ENCODE measurements at regions of chr9 and their contacts with region 1.

Region 1: DNA sequence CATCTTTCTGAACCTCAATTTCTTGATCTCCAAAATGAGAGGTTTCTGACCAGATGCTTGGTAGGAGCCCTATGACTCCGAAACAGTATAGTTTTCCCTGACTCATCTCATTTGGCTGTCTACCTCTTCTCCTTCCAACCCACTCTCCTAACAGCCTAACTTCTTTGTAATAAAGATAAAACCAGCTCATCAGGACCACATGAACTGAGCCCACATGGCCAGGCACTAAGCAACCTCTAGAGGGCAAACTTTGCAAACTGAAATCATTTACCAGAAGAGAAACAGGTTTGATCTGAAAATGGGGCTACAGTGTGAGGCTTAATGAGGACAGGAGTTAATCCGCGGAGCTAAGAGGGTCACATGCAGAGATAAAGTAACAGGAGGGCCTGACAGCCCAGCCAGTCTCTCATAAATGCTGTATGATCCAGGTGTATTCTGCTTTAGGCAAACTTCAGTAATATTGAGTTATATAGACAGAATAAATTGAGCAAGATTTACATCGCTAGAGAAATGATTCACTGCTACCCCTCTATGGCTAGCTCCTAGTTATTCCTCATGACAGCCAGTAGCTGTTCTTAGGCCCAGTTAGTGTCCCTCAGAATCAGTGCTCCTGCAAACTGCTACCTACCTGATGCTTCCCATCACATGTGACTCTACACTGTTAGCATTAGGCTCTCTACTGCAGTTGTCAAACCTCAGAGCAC is 64.6 kb downstream of the ABCA1 start:
- DNase-seq: no peak
- ATAC-seq: peak; percentile 74
- H3K4me3 Mint-ChIP-seq: no peak overlapping the region
- H3K27ac Mint-ChIP-seq: no peak overlapping the region
- H3K4me1 Mint-ChIP-seq: peaks cover 53% of the 10 kb centered on the region
- H3K27me3 Mint-ChIP-seq: no peaks in the 10 kb centered on the region
- CTCF ChIP-seq: no peak

Region 2: GRCh38 chr9:104700306-104701028 is 162.9 kb before region 1 on chr9:
- CTCF ChIA-PET with region 1: no interaction called
- POLR2A ChIA-PET with region 1: no interaction called
- intact Hi-C with region 1: no loop called
- DNase-seq: no peak
- ATAC-seq: no peak
- H3K4me3 Mint-ChIP-seq: no peak overlapping the region
- H3K27ac Mint-ChIP-seq: no peak overlapping the region
- H3K4me1 Mint-ChIP-seq: no peaks in the 10 kb centered on the region
- H3K27me3 Mint-ChIP-seq: no peaks in the 10 kb centered on the region
- CTCF ChIP-seq: no peak

Region 3: DNA sequence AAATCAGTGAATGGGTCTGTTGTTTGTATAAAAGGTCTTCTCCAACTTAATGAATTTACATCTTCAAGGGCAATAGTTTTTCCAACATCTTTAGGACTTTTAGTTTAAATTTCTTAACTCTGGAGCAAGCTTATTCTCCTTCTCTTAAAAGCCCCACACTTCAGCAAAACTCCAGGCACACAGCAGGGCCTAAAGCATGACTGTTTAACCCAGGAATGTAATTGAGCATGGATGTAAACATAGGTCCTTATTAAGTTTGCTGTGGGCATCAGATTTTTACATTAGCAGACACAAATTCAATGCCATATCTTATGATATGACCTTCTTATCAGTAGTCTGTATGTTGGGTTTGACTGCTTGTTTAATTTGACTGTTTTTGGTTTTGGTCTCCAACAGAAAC is 14.3 kb before region 1 on chr9:
- CTCF ChIA-PET with region 1: interaction called, 12 read pairs
- POLR2A ChIA-PET with region 1: no interaction called
- intact Hi-C with region 1: no loop called
- DNase-seq: no peak
- ATAC-seq: no peak
- H3K4me3 Mint-ChIP-seq: no peak overlapping the region
- H3K27ac Mint-ChIP-seq: no peak overlapping the region
- H3K4me1 Mint-ChIP-seq: no peaks in the 10 kb centered on the region
- H3K27me3 Mint-ChIP-seq: no peaks in the 10 kb centered on the region
- CTCF ChIP-seq: no peak

Region 4: GRCh38 chr9:104991144-104991953 is 128.0 kb after region 1 on chr9:
- CTCF ChIA-PET with region 1: no interaction called
- POLR2A ChIA-PET with region 1: no interaction called
- intact Hi-C with region 1: loop called (anchors 1 kb)
- DNase-seq: peak; percentile 69
- ATAC-seq: peak; percentile 80
- H3K4me3 Mint-ChIP-seq: peak overlapping the region; percentile 86
- H3K27ac Mint-ChIP-seq: peak overlapping the region; percentile 69
- H3K4me1 Mint-ChIP-seq: peaks cover 33% of the 10 kb centered on the region
- H3K27me3 Mint-ChIP-seq: peaks cover 2% of the 10 kb centered on the region
- CTCF ChIP-seq: no peak

Region 5: DNA sequence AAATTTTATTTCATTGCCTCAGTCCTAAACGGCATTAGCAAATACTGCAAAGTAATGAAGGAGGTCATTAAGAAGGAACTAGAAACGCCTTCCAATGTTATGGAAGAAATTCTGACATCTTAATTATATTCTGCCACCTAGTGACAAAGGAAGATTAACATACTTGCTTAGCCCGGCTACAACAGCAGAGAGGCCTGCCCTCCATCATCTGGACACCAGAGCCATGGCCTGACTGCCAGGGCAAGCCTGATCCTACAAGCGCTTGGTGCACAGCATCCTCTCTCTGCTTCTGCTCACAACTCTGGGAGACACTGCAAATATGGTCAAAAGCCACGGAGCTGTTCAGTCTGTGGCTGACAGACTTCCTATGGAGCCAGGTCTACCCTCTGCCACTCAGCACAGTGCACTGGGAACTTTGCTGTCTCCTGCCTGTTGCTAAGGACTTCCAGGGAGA is 293.8 kb after region 1 on chr9:
- CTCF ChIA-PET with region 1: interaction called, 53 read pairs
- POLR2A ChIA-PET with region 1: no interaction called
- intact Hi-C with region 1: loop called (anchors 1 kb)
- DNase-seq: no peak
- ATAC-seq: peak; percentile 50
- H3K4me3 Mint-ChIP-seq: no peak overlapping the region
- H3K27ac Mint-ChIP-seq: no peak overlapping the region
- H3K4me1 Mint-ChIP-seq: no peaks in the 10 kb centered on the region
- H3K27me3 Mint-ChIP-seq: no peaks in the 10 kb centered on the region
- CTCF ChIP-seq: no peak

Region 6: GRCh38 chr9:105414947-105415661 is 551.8 kb after region 1 on chr9:
- CTCF ChIA-PET with region 1: interaction called, 63 read pairs
- POLR2A ChIA-PET with region 1: interaction called, 4 read pairs
- intact Hi-C with region 1: loop called (anchors 1 kb)
- DNase-seq: peak; percentile 18
- ATAC-seq: peak; percentile 85
- H3K4me3 Mint-ChIP-seq: no peak overlapping the region
- H3K27ac Mint-ChIP-seq: no peak overlapping the region
- H3K4me1 Mint-ChIP-seq: peaks cover 4% of the 10 kb centered on the region
- H3K27me3 Mint-ChIP-seq: no peaks in the 10 kb centered on the region
- CTCF ChIP-seq: no peak

Measured in activated B cell treated with CpG ODN at 0.5 μM for 24 hours (primary cell).